Mammary epithelial cell (primary cell): ENCODE measurements at regions of chr11 and their contacts with region 1.

Region 1: DNA sequence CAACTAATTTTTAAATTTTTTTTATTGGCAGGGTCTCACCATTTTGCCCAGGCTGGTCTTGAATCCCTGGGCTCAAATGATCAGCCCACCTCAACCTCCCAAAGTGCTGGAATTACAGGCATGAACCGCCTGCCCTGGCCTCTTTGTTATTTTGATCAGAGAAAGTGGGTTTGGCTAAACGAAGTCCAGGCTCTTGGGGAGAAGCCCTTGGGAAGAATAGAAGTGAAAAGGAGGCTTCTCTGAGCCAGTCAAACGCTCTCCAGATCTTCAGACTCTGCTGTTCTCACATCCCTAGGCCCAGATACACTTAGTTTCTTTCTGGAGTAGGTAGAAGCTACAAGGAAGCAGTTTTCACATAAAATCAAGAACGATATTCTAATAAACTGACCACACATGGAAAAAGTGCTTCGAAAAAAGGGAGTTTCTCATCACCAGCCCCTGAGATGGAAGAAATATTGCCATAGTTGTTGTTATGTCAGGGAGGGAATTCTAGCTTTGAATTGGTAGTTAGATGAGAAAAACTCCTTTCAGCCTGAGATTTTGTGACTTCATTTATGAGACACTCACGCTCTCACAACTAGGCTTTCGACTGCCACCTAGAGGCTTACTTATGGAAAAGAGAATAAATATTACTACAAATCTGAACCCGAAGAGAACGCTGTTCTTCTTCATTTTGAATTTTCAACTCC is 41.7 kb upstream of the AQP11 start:
- DNase-seq: peak; percentile 47
- H3K4me3 ChIP-seq: no peak overlapping the region
- H3K27ac ChIP-seq: no peak overlapping the region
- H3K4me1 ChIP-seq: no peaks in the 10 kb centered on the region
- H3K27me3 ChIP-seq: no peaks in the 10 kb centered on the region
- CTCF ChIP-seq: peak; percentile 47 to 69

Region 2: DNA sequence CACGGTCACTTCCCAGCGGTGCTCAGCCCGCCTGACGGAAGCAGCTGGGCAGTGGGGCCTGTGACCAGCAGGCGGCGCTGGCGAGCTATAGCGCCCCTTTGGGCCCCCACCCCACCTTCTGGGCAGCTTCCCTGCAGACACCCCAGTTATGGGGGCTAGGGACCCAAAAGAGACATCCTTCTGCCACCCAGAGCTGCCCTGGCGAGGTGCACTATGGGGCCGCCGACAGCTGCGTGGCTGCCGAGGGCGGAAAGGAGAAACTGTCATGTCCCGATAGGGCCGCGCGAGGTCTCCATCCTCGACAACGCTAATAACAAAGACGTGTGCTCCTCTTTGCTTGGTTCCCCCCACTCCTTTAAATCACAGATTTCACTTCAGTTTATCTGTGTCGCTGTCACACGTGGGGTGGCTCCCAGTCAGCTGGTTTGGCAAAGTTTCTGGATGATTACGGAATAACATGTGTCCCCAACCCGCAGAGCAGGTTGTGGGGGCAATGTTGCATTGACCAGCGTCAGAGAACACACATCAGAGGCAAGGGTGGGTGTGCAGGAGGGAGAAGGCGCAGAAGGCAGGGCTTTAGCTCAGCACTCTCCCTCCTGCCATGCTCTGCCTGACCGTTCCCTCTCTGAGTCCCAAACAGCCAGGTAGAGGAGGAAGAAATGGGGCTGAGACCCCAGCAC is 420.6 kb before region 1 on chr11:
- CTCF ChIA-PET with region 1: interaction called, 3 read pairs
- dilution Hi-C with region 1: no loop called
- in situ Hi-C with region 1: no loop called
- intact Hi-C with region 1: loop called (anchors 1 kb)
- DNase-seq: peak; percentile 16
- H3K4me3 ChIP-seq: peak overlapping the region; percentile 27 to 55 (median 40)
- H3K27ac ChIP-seq: no peak overlapping the region
- H3K4me1 ChIP-seq: peaks cover 8% of the 10 kb centered on the region
- H3K27me3 ChIP-seq: no peaks in the 10 kb centered on the region
- CTCF ChIP-seq: peak; percentile 88 to 99

Region 3: DNA sequence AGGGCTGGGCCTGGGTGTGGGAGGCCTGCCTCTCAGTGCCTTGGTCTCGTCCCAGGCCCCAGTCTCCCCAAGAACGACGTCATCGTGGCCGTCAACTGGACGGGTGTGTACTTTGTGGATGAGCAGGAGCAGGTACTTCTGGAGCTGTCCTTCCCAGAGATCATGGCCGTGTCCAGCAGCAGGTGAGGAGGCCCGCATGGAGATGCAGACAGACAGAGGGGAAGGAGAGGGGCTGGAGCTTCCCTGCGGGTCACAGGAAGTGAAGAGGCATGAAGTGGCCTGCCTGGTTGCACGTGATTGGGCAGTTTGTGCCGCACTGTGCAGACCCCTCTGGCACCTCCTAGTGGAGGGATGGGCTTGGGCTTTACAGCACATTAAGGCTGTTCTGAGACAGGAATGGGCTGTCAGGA is 349.6 kb before region 1 on chr11:
- CTCF ChIA-PET with region 1: no interaction called
- dilution Hi-C with region 1: loop called (anchors 10 kb)
- in situ Hi-C with region 1: loop called (anchors 5 to 10 kb)
- intact Hi-C with region 1: no loop called
- DNase-seq: no peak
- H3K4me3 ChIP-seq: no peak overlapping the region
- H3K27ac ChIP-seq: no peak overlapping the region
- H3K4me1 ChIP-seq: no peaks in the 10 kb centered on the region
- H3K27me3 ChIP-seq: no peaks in the 10 kb centered on the region
- CTCF ChIP-seq: peak; percentile 43

Region 4: DNA sequence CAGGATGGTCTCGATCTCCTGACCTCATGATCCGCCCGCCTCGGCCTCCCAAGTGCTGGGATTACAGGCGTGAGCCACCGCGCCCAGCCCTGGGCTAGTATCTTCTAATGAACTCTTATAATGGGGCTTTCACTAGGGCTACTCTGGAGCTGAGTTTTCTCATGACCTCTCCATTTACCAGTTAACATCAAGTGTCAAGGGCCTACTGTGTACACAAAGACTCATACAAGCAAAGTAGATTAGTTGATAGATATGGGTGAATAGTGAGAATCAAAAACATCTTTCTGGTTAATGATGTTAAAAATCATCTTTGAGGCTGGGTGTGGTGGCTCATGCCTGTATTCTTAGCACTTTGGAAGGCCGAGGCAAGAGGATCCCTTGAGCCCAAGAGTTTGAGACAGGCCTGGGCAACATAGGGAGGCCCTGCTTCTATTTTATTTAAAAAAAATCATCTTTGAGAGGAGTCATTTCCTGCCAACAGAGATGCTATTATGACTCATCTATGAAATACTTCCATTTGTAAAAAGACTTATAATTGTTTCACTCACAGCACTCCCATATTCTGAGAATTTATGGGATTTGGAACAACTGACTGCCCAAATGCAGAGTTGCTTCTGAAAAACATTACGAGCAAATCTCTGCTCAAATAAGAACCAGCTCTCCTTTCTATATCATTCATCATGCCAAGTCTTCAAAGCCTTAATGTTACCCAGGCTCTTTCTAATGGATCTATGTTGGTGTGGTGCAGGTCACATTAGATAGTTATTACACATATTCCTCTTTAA is 303.6 kb before region 1 on chr11:
- CTCF ChIA-PET with region 1: no interaction called
- dilution Hi-C with region 1: no loop called
- in situ Hi-C with region 1: no loop called
- intact Hi-C with region 1: no loop called
- DNase-seq: peak; percentile 75
- H3K4me3 ChIP-seq: no peak overlapping the region
- H3K27ac ChIP-seq: peak overlapping the region; percentile 79
- H3K4me1 ChIP-seq: peaks cover 16% of the 10 kb centered on the region
- H3K27me3 ChIP-seq: no peaks in the 10 kb centered on the region
- CTCF ChIP-seq: no peak

Region 5: DNA sequence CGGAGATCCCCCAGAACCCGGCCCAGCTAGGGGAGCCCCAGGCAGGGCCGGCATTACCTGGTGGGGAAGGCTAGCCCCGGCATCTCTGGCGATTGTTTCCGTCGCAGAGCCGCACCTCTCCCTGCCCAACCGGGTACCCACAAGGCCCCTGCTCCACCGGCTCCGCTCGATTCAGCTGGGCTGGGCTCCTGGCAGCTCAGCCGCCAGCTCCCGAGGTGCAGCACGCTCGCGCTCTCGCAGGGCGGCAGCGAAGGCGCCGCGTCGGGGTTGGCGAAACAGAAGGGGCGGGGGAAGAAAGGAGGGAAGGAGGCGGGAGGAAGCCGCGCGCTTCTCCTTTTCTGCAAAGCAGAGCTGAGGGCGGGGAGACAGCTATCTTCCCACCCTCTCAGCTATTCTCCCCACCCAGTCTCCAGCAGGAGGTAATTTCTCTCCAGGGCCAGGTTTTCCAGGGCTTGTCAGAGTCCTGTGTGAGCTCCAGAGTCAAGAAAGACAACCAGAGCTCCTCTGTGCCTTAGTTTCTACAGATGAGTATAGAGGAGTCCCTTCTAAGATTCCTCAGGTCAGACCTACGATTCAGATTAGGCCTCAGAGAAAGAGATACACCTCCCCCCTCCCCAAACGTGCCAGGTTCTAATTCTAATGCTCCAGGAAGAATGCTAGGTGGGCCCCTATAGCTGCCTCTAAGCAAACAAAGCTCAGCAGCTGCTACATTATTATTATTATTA is 136.1 kb before region 1 on chr11:
- CTCF ChIA-PET with region 1: interaction called, 4 read pairs
- dilution Hi-C with region 1: no loop called
- in situ Hi-C with region 1: no loop called
- intact Hi-C with region 1: loop called (anchors 2 kb)
- DNase-seq: peak; percentile 92
- H3K4me3 ChIP-seq: peak overlapping the region; percentile 65 to 87 (median 76)
- H3K27ac ChIP-seq: peak overlapping the region; percentile 58
- H3K4me1 ChIP-seq: peaks cover 32% of the 10 kb centered on the region
- H3K27me3 ChIP-seq: no peaks in the 10 kb centered on the region
- CTCF ChIP-seq: peak in 1 of 2 donors; percentile 36

Region 6: GRCh38 chr11:77487790-77488189 is 60.2 kb before region 1 on chr11:
- CTCF ChIA-PET with region 1: no interaction called
- dilution Hi-C with region 1: no loop called
- in situ Hi-C with region 1: no loop called
- intact Hi-C with region 1: loop called (anchors 5 kb)
- DNase-seq: peak; percentile 81
- H3K4me3 ChIP-seq: no peak overlapping the region
- H3K27ac ChIP-seq: no peak overlapping the region
- H3K4me1 ChIP-seq: peaks cover 4% of the 10 kb centered on the region
- H3K27me3 ChIP-seq: no peaks in the 10 kb centered on the region
- CTCF ChIP-seq: peak in 1 of 2 donors; percentile 22

Region 7: DNA sequence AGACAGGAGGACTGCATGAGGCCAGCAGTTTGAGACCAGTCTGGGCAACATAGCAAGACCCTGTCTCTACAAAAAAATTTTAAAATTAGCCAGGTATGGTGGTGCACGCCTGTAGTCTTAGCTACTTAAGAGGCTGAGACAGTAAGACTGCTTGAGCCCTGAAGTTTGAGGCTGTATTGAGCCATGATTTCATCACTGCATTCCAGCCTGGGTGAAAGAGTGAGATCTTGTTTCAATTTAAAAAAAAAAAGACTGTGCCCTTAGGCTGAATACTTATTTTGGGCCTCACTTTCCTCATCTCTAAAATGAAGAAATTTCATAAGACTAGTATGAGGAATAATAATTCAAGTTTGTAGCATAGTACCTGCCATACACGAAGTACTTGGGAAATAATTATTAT is 48.6 kb after region 1 on chr11:
- CTCF ChIA-PET with region 1: no interaction called
- dilution Hi-C with region 1: no loop called
- in situ Hi-C with region 1: no loop called
- intact Hi-C with region 1: no loop called
- DNase-seq: peak; percentile 15
- H3K4me3 ChIP-seq: no peak overlapping the region
- H3K27ac ChIP-seq: no peak overlapping the region
- H3K4me1 ChIP-seq: peaks cover 1% of the 10 kb centered on the region
- H3K27me3 ChIP-seq: no peaks in the 10 kb centered on the region
- CTCF ChIP-seq: no peak